ENCODE measurements at regions of chr5 and their contacts with region 1.

Region 1: GRCh38 chr5:132114150-132115121 is 40.8 kb downstream of the CSF2 start:
- DNase-seq: no peak
- H3K4me3 Mint-ChIP-seq: no peak overlapping the region
- H3K27ac Mint-ChIP-seq: peak overlapping the region; percentile 39
- H3K4me1 Mint-ChIP-seq: peaks cover 73% of the 10 kb centered on the region
- H3K27me3 Mint-ChIP-seq: no peaks in the 10 kb centered on the region

Region 2: DNA sequence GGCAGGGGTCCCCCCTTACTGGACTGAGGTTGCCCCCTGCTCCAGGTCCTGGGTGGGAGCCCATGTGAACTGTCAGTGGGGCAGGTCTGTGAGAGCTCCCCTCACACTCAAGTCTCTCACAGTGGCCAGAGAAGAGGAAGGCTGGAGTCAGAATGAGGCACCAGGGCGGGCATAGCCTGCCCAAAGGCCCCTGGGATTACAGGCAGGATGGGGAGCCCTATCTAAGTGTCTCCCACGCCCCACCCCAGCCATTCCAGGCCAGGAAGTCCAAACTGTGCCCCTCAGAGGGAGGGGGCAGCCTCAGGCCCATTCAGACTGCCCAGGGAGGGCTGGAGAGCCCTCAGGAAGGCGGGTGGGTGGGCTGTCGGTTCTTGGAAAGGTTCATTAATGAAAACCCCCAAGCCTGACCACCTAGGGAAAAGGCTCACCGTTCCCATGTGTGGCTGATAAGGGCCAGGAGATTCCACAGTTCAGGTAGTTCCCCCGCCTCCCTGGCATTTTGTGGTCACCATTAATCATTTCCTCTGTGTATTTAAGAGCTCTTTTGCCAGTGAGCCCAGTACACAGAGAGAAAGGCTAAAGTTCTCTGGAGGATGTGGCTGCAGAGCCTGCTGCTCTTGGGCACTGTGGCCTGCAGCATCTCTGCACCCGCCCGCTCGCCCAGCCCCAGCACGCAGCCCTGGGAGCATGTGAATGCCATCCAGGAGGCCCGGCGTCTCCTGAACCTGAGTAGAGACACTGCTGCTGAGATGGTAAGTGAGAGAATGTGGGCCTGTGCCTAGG is 41.0 kb before region 1 on chr5 and contains the start of gene CSF2:
- CTCF ChIA-PET with region 1: no interaction called
- POLR2A ChIA-PET with region 1: no interaction called
- intact Hi-C with region 1: loop called (anchors 5 kb)
- DNase-seq: peak; percentile 50
- H3K4me3 Mint-ChIP-seq: peak within 1 kb of the TSS; percentile 61
- H3K27ac Mint-ChIP-seq: peak within 1 kb of the TSS; percentile 69
- H3K4me1 Mint-ChIP-seq: peaks cover 56% of the 10 kb centered on the region
- H3K27me3 Mint-ChIP-seq: no peaks in the 10 kb centered on the region
- total RNA-seq, gene CSF2: 125 to 128 TPM

Region 3: DNA sequence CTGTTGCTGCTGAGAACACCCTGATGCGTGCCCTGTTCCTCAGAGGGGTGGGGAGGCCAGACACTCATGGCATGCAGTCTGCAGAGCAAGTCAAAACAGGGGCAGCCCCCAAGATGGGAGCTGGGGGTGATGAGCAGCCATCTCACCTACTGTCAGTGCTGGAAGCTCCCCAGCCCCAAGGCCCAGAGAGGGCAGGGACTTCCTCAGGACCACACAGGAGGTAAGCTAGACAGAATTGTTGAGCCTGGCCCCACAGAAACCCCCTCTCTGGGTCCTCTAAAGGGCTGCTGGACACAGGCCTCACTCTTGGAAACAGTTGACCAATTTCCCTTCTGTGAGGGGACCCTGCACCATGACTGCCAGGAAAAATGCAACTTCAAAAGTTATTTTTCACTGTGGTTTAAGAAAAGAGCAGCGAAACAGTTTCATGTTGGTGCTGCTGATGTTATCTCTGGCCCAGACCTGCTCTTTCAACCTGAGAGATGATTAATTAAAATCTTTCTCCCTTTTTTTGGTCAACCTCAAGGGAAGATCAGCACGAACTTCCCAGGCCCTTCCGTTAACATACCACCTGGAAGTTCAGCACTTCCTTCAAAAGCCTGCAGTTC is 31.3 kb before region 1 on chr5:
- CTCF ChIA-PET with region 1: no interaction called
- POLR2A ChIA-PET with region 1: no interaction called
- intact Hi-C with region 1: loop called (anchors 1 kb)
- DNase-seq: peak; percentile 69
- H3K4me3 Mint-ChIP-seq: no peak overlapping the region
- H3K27ac Mint-ChIP-seq: peak overlapping the region; percentile 44
- H3K4me1 Mint-ChIP-seq: peaks cover 50% of the 10 kb centered on the region
- H3K27me3 Mint-ChIP-seq: no peaks in the 10 kb centered on the region

Region 4: DNA sequence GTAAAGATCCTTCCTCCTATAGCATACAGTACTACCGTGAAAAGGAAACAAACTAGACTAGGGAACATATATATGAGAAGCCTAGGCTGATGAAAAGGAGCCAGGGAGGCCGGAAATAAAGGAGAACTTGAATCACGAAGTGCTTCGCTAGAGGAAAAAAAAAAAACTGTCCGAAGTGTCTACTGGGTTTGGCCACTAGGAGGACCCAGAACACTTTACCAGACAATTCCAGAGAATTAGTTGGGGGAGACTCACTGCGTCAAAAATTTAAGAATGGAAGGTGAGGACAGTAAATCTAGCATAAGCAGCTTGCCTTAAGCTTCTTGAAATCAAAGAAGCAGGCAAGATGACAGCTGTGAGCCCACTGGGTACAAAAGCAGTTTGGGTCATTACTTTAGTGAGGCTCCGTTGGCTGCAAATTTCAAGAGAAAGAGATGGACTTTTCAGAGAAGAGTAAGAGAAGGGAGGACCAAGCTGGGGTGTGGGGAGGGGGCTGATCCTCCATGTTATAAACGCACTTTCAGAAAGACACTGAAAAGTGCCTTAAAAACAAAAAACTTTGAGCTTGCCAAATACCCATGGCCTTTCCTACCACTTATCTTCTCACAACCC is 65.8 kb after region 1 on chr5:
- CTCF ChIA-PET with region 1: interaction called, 4 read pairs
- POLR2A ChIA-PET with region 1: no interaction called
- intact Hi-C with region 1: loop called (anchors 2 kb)
- DNase-seq: no peak
- H3K4me3 Mint-ChIP-seq: no peak overlapping the region
- H3K27ac Mint-ChIP-seq: peak overlapping the region; percentile 1
- H3K4me1 Mint-ChIP-seq: peaks cover 32% of the 10 kb centered on the region
- H3K27me3 Mint-ChIP-seq: no peaks in the 10 kb centered on the region